ENCODE measurements at regions of chr20 and their contacts with region 1.

Region 1: GRCh38 chr20:9071976-9072726 is 3.3 kb downstream of the PLCB4 start:
- DNase-seq: no peak
- H3K4me3 ChIP-seq: no peak overlapping the region
- H3K27ac ChIP-seq: no peak overlapping the region
- H3K4me1 ChIP-seq: peaks cover 6% of the 10 kb centered on the region; the same call in 1 of the 2 replicates
- H3K27me3 ChIP-seq: no peaks in the 10 kb centered on the region

Region 2: DNA sequence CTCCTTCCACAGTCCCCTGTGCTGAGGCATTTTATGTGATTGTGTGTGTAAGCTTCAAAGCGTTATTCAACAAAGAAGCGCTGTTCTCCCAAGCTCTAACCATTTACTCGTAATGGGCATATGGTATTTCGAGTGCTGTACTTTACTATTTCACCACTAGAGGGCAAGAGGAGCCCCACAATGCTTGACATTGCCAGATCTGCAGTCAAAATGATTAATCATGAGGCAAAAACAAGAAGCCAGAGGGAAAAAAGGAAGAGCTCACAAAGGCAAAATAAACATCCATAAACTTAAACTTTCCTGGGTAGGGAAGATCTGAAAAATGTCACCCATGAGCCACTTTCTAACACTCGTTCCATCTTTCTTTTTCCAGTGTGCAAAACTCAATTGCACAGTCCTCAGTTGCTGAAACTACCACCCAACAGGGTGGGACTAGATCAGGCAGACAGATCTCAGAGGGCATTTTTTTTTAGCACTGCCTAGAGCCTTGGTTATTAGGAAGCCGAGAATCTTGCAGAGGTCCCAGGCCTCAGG is 218.3 kb before region 1 on chr20:
- in situ Hi-C with region 1: loop called (anchors 10 kb)
- DNase-seq: peak; percentile 75
- H3K4me3 ChIP-seq: peak overlapping the region; percentile 60
- H3K27ac ChIP-seq: peak overlapping the region; percentile 46
- H3K4me1 ChIP-seq: peaks cover 26% of the 10 kb centered on the region
- H3K27me3 ChIP-seq: no peaks in the 10 kb centered on the region

Measured in GM23248 (cell line).